ENCODE measurements at regions of chr1 and their contacts with region 1.

Region 1: GRCh38 chr1:165898837-165899236 is 71.4 kb downstream of the UCK2 start:
- DNase-seq: peak; percentile 98
- H3K4me3 ChIP-seq: no peak overlapping the region
- CTCF ChIP-seq: no peak

Region 2: GRCh38 chr1:165768513-165769394 is 130.1 kb before region 1 on chr1 and contains the start of gene TMCO1:
- CTCF ChIA-PET with region 1: interaction called, 3 read pairs
- POLR2A ChIA-PET with region 1: interaction called, 12 read pairs
- DNase-seq: peak; percentile 89
- H3K4me3 ChIP-seq: peak within 1 kb of the TSS; percentile 91
- CTCF ChIP-seq: peak; percentile 16

Region 3: DNA sequence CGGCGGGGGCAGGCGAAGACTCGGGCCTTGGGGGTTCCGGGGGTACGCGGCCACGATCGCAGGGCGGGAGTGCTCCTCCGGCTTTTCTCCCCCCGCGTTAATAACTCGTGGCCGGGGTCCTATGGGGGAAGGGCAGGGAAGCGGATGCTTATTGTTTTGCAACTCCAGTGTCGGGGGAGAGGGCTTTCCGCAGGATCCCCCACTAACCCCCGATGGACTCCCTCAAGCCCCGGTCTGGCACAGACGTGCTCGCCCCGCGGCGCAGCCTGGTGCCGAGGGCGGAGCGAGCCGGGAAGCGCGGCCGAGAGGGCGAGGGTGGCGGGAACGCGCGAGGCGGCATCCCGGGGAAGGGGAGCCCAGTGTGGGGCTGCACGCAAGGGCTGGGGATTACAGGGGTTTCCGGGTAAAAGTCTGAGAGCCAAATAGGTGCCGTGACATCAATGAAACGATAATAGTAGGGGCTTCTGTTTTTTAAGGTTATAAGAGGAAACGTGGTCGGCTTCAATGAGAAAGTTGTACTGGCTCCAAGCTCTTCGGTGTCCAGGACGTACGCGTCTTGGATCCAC is 70.7 kb before region 1 on chr1:
- CTCF ChIA-PET with region 1: interaction called, 10 read pairs
- POLR2A ChIA-PET with region 1: interaction called, 7 read pairs
- DNase-seq: no peak
- H3K4me3 ChIP-seq: peak overlapping the region; percentile 83
- CTCF ChIP-seq: no peak